HCT116 (cell line): ENCODE measurements at regions of chr12 and their contacts with region 1.

Region 1: DNA sequence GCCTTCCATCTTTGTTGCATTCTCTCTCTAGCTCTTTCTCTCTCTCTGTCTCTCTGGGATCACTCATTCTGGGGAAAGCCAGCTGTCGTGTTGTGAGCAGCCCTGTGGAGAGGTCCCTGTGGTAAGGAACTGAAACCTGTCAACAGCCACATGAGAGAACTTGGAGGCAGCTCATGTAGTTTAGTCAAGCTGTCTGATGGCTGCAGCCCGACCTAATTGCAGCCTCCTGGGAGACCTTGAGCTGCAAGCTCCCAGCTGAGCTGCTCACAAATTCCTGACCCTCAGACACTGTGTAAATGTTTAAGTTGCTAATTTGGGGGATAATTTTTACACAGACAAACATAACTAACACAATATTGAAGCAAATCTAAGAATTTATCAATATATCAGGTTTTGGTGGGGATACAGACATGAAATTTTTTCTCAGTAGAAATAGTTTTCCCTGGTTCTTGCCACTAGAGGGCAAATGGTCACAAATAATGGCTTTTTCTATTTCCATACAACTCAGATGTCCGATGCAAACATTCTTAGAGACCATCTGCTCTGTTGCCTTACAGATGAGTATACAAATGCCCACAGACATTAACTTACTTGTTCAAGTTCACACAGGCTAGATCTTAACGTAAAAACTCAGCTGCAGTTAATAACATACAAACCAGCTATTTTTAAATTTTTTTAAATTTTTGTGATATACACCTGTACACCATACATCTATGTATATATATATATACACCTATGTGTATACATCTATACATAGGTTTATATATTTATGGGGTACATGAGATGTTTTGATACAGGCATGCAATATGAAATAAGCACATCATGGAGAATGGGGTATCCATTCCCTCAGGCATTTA is 15.5 kb upstream of the KRR1 start:
- DNase-seq: peak; percentile 40
- ATAC-seq: peak; percentile 76
- H3K4me3 ChIP-seq: no peak overlapping the region
- H3K27ac ChIP-seq: peak overlapping the region; percentile 72
- H3K4me1 ChIP-seq: peaks cover 17 to 35% of the 10 kb centered on the region in 2 experiments
- H3K27me3 ChIP-seq: no peaks in the 10 kb centered on the region
- CTCF ChIP-seq: peak; percentile 62 to 77 (median 68); a peak in 5 of 6 replicates
- POLR2A ChIP-seq: no peak
- RAD21 ChIP-seq: peak; percentile 95

Region 2: GRCh38 chr12:74747305-74747704 is 779.6 kb before region 1 on chr12:
- CTCF ChIA-PET with region 1: no interaction called
- POLR2A ChIA-PET with region 1: no interaction called
- RAD21 ChIA-PET with region 1: no interaction called
- intact Hi-C with region 1: no loop called
- DNase-seq: peak; percentile 21
- ATAC-seq: no peak
- H3K4me3 ChIP-seq: no peak overlapping the region
- H3K27ac ChIP-seq: no peak overlapping the region
- H3K4me1 ChIP-seq: no peaks in the 10 kb centered on the region
- H3K27me3 ChIP-seq: no peaks in the 10 kb centered on the region
- CTCF ChIP-seq: peak; percentile 26 to 34 (median 33); a peak in 3 of 6 replicates
- POLR2A ChIP-seq: no peak
- RAD21 ChIP-seq: peak; percentile 62

Region 3: GRCh38 chr12:75623631-75624118 is 96.8 kb after region 1 on chr12:
- CTCF ChIA-PET with region 1: interaction called, 4 read pairs
- POLR2A ChIA-PET with region 1: interaction called, 3 read pairs
- RAD21 ChIA-PET with region 1: interaction called, 3 to 4 read pairs
- intact Hi-C with region 1: loop called (anchors 5 kb)
- DNase-seq: peak; percentile 89
- ATAC-seq: peak; percentile 92
- H3K4me3 ChIP-seq: no peak overlapping the region
- H3K27ac ChIP-seq: peak overlapping the region; percentile 99
- H3K4me1 ChIP-seq: peaks cover 39 to 70% of the 10 kb centered on the region in 2 experiments
- H3K27me3 ChIP-seq: no peaks in the 10 kb centered on the region
- CTCF ChIP-seq: peak; percentile 49 to 64 (median 51); a peak in 5 of 6 replicates
- POLR2A ChIP-seq: peak; percentile 26
- RAD21 ChIP-seq: peak; percentile 81

Region 4: GRCh38 chr12:76031537-76032073 is 504.7 kb after region 1 on chr12 and contains the start of gene PHLDA1:
- CTCF ChIA-PET with region 1: no interaction called
- POLR2A ChIA-PET with region 1: no interaction called
- RAD21 ChIA-PET with region 1: no interaction called
- intact Hi-C with region 1: loop called (anchors 5 kb)
- DNase-seq: peak; percentile 77
- ATAC-seq: peak; percentile 70
- H3K4me3 ChIP-seq: peak within 1 kb of the TSS; percentile 75
- H3K27ac ChIP-seq: peak within 1 kb of the TSS; percentile 88
- H3K4me1 ChIP-seq: peaks cover 23 to 59% of the 10 kb centered on the region in 2 experiments
- H3K27me3 ChIP-seq: no peaks in the 10 kb centered on the region
- CTCF ChIP-seq: peak in 1 of 3 experiments; percentile 22; a peak in 1 of 6 replicates
- POLR2A ChIP-seq: peak; percentile 67
- RAD21 ChIP-seq: no peak; the same call in 1 of the 2 replicates
- total RNA-seq, gene PHLDA1: 231 TPM

Region 5: GRCh38 chr12:76455582-76456345 is 928.9 kb after region 1 on chr12:
- CTCF ChIA-PET with region 1: interaction called, 7 read pairs
- POLR2A ChIA-PET with region 1: interaction called, 3 read pairs
- RAD21 ChIA-PET with region 1: interaction called in 1 of 2 experiments, 3 read pairs
- intact Hi-C with region 1: loop called (anchors 2 kb)
- DNase-seq: peak; percentile 90
- ATAC-seq: peak; percentile 84
- H3K4me3 ChIP-seq: 0 out of 4 replicates have a peak overlapping the region, but pooled peaks of 1 of the 2 experiments have one; percentile 3
- H3K27ac ChIP-seq: peak overlapping the region; percentile 81
- H3K4me1 ChIP-seq: peaks cover 42 to 60% of the 10 kb centered on the region in 2 experiments
- H3K27me3 ChIP-seq: no peaks in the 10 kb centered on the region
- CTCF ChIP-seq: peak; percentile 57 to 82 (median 74)
- POLR2A ChIP-seq: peak; percentile 78
- RAD21 ChIP-seq: peak; percentile 96

Region 6: GRCh38 chr12:76586764-76587395 is 1060.0 kb after region 1 on chr12:
- CTCF ChIA-PET with region 1: interaction called, 4 read pairs
- POLR2A ChIA-PET with region 1: no interaction called
- RAD21 ChIA-PET with region 1: no interaction called
- intact Hi-C with region 1: loop called (anchors 1 kb)
- DNase-seq: peak; percentile 27
- ATAC-seq: peak; percentile 59; the same call in 1 of the 2 replicates
- H3K4me3 ChIP-seq: no peak overlapping the region
- H3K27ac ChIP-seq: no peak overlapping the region
- H3K4me1 ChIP-seq: peaks cover 6 to 9% of the 10 kb centered on the region in 2 experiments
- H3K27me3 ChIP-seq: no peaks in the 10 kb centered on the region
- CTCF ChIP-seq: peak; percentile 50 to 83 (median 63); a peak in 5 of 6 replicates
- POLR2A ChIP-seq: no peak
- RAD21 ChIP-seq: peak; percentile 83

Region 7: DNA sequence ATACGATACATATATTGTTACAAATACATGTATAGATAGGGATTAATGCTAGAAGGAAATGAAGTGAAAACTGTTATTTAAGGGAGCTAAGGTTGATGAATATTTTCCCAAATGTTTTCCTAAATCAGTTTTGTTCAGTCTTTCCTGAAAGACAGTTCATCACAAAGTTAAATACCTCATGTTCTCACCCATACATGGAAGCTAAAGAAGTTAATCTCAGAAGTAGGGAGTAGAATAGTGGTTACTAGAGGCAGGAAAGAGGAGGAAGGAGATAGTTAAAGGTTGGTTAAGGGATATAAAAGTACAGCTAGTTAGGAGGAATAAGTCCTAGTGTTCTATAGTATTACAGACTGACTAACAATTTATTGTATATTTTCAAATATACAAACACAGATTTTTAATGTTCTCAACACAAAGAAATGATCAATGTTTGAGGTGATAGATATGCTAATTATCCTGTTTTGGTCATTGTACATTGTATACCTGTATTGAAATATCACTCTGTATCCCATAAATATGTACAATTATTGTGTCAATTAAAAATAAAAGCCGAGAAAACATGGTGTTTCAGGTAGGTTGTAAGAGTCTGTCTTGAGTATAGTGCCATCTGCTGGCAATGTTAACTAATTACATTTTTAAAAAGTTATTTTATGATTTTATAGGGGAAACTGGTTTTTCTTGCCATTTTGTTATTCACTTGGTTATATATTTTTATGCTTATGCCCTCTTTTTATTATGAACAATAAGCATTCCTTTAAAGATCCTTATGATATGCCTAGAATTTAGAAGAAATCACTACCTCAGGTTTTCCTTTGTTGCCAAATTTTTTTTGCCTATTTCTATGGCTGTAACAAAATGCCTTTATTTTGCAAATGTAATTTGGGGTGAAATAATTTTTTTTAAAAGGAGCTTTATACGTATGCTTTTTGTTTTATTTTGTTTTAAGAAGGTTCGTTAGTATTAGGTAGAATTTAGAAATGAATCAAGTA is 1264.0 kb after region 1 on chr12:
- CTCF ChIA-PET with region 1: no interaction called
- POLR2A ChIA-PET with region 1: no interaction called
- RAD21 ChIA-PET with region 1: no interaction called
- intact Hi-C with region 1: loop called (anchors 5 kb)
- DNase-seq: peak; percentile 6
- ATAC-seq: peak; percentile 42; the same call in 1 of the 2 replicates
- H3K4me3 ChIP-seq: no peak overlapping the region
- H3K27ac ChIP-seq: no peak overlapping the region
- H3K4me1 ChIP-seq: no peaks in the 10 kb centered on the region
- H3K27me3 ChIP-seq: no peaks in the 10 kb centered on the region
- CTCF ChIP-seq: peak; percentile 41 to 68 (median 62); a peak in 4 of 6 replicates
- POLR2A ChIP-seq: no peak
- RAD21 ChIP-seq: peak; percentile 83